Activated CD4-positive, alpha-beta memory T cell treated with anti-CD3 and anti-CD28 coated beads, Interleukin-2, amount 10 ng/mL, durations not matched to agents 7 days and 5 days (primary cell): ENCODE measurements at regions of chr3 and their contacts with region 1.

Region 1: GRCh38 chr3:101676765-101677435 is at the start of gene ZBTB11:
- DNase-seq: peak; percentile 100
- H3K4me3 Mint-ChIP-seq: peak within 1 kb of the TSS; percentile 82
- H3K27ac Mint-ChIP-seq: peak within 1 kb of the TSS; percentile 97
- H3K4me1 Mint-ChIP-seq: peaks cover 57% of the 10 kb centered on the region
- H3K27me3 Mint-ChIP-seq: no peaks in the 10 kb centered on the region
- total RNA-seq, gene ZBTB11: 29.3 to 31.9 TPM

Region 2: DNA sequence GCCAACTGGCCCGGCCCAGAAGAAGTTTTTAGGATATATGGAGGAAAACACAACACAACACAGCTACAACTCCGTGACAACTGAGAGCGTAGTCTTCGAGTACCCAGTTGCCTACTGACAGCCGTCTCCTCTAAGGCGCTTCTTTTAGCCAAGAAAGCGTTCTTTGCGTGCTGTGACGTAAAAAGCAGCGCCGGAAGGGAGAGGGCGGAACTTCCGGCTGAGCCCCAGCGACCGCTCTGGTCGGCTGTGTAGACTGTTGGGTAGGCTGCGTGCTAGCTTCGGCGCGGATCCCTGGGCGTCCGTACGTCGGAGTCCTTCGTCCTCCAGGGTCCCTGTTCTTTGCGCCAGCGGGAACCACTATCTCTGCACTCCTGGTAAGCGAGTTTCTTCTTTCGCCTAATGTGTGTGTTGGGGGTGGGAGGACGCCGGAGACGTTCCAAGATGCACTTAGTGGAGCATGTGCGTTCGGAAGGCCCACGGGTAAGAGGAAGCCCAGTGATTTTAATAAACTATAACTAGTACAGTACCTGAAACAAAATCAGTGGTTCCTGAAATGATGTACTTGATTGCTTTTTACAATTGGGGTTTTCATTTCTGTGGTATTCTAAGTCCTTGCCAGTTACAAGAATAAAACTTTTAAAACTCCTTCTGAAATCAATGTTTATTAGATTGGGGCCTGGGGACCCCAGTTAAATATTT is 115.1 kb before region 1 on chr3 and contains the start of gene TRMT10C:
- CTCF ChIA-PET with region 1: no interaction called
- POLR2A ChIA-PET with region 1: interaction called, 13 read pairs
- DNase-seq: peak; percentile 95
- H3K4me3 Mint-ChIP-seq: peak within 1 kb of the TSS; percentile 98
- H3K27ac Mint-ChIP-seq: peak within 1 kb of the TSS; percentile 93
- H3K4me1 Mint-ChIP-seq: peaks cover 37% of the 10 kb centered on the region
- H3K27me3 Mint-ChIP-seq: peaks cover under 1% of the 10 kb centered on the region
- total RNA-seq, gene TRMT10C: 21.4 to 22.7 TPM

Region 3: DNA sequence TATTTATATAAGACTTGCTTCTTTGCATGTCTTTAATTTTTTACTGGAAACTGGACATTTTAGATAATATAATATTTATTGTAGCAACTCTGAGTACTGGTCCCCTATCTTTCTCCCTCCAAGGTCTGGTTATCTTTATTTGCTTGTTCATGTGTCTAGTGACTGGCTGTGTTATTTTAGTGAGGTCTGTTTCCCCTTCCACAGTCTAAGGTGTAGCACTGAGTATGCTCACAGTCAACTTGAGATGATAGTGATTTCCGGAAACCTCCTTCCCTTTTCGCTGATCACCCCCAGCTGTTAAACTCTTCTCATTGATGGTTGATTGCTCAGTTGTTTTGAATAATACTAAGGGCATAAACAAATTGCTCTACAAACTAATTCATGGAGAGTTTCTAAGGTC is 65.9 kb before region 1 on chr3:
- CTCF ChIA-PET with region 1: no interaction called
- POLR2A ChIA-PET with region 1: no interaction called
- DNase-seq: no peak
- H3K4me3 Mint-ChIP-seq: no peak overlapping the region
- H3K27ac Mint-ChIP-seq: no peak overlapping the region
- H3K4me1 Mint-ChIP-seq: no peaks in the 10 kb centered on the region
- H3K27me3 Mint-ChIP-seq: no peaks in the 10 kb centered on the region

Region 4: DNA sequence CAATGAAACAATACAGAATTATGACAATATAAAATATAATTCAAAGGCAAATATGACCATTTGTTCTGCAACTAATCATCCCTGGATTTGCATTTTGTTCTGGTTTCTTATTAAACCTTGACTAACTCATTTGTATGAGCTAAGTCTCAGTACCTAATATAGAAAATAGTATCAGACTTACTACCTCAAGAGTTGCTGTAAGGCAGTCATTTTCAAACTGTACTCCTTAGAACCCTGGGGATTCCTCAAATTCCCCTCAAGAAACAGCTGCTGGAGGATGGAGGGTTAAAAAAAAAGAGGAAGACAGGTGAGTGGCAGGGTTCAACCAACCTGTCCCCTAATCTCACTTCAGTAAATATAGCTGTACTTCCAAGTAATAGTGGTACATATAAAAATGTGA is 11.0 kb before region 1 on chr3:
- CTCF ChIA-PET with region 1: interaction called, 3 read pairs
- POLR2A ChIA-PET with region 1: interaction called, 27 read pairs
- DNase-seq: no peak
- H3K4me3 Mint-ChIP-seq: no peak overlapping the region
- H3K27ac Mint-ChIP-seq: no peak overlapping the region
- H3K4me1 Mint-ChIP-seq: peaks cover 1% of the 10 kb centered on the region
- H3K27me3 Mint-ChIP-seq: no peaks in the 10 kb centered on the region

Region 5: DNA sequence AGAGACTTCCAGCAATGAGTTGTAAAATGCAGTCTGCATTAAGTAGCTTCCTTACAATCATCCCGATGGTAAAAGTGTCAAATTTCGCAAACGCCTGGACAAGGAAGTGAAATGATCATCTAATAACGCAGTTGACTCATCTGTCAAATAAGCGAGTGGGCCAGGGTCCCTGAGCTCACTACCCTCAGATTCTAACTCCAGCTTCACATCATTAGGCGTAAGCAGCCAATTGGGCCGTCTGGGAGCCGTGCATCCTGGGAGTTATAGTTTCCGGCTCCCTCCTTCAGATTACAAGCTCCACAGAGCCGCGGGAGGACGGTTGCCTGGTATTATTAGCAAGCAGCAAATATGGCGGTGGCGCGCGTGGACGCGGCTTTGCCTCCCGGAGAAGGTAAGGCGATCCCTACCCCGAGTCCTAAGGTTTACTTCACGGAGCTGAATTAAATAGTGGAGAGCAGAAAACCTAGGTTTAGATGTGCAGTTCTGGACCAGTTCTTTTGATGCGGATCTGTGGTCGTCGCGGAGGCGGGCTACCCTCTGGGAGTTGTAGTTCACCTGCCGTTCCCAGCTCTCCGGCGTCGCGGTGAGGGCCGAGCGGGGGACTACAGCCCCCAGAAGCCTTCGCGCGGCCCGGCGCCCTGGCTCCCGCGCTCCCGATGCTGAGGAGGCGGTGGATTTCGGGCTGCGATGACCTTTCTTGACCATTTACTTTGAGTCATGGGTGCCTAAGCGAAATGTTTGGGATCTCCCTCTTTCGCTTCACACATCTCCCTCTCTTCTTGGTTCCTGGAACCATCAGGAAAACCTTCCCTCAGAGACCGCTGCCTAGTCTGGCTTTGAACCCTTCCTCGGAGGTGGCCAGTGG is 47.7 kb after region 1 on chr3 and contains the start of gene CEP97:
- CTCF ChIA-PET with region 1: interaction called, 3 read pairs
- POLR2A ChIA-PET with region 1: interaction called, 23 read pairs
- DNase-seq: peak; percentile 90
- H3K4me3 Mint-ChIP-seq: peak within 1 kb of the TSS; percentile 93
- H3K27ac Mint-ChIP-seq: peak within 1 kb of the TSS; percentile 92
- H3K4me1 Mint-ChIP-seq: peaks cover 55% of the 10 kb centered on the region
- H3K27me3 Mint-ChIP-seq: no peaks in the 10 kb centered on the region
- total RNA-seq, gene CEP97: 22.7 to 25.8 TPM

Region 6: DNA sequence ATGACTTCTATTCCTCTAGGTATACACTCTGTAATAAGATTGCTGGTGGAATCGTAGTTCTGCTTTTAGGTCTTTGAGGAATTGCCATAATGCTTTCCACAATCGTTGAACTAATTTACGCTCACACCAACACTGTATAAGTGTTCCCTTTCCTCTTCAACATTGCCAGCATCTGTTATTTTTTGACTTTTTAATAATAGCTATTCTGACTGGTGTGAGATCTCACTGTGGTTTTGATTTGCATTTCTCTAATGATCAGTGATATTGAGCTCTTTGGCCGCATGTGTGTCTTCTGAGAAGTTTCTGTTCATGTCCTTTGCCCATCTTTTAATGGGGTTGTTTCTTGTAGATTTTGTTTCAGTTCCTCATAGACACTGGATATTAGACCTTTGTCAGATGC is 114.9 kb after region 1 on chr3:
- CTCF ChIA-PET with region 1: no interaction called
- POLR2A ChIA-PET with region 1: no interaction called
- DNase-seq: no peak
- H3K4me3 Mint-ChIP-seq: no peak overlapping the region
- H3K27ac Mint-ChIP-seq: no peak overlapping the region
- H3K4me1 Mint-ChIP-seq: peaks cover 22% of the 10 kb centered on the region
- H3K27me3 Mint-ChIP-seq: no peaks in the 10 kb centered on the region